MCF 10A (cell line): ENCODE measurements at regions of chr4 and their contacts with region 1.

Region 1: GRCh38 chr4:139301113-139301820 is at the start of gene NAA15:
- DNase-seq: peak; percentile 98
- H3K4me3 Mint-ChIP-seq: peak within 1 kb of the TSS; percentile 87
- H3K27ac Mint-ChIP-seq: peak within 1 kb of the TSS; percentile 98
- H3K4me1 Mint-ChIP-seq: peaks cover 7% of the 10 kb centered on the region
- H3K27me3 Mint-ChIP-seq: no peaks in the 10 kb centered on the region
- CTCF ChIP-seq: no peak
- total RNA-seq, gene NAA15: 54.9 and 80.6 TPM in 2 replicates

Region 2: GRCh38 chr4:139015269-139015947 is 285.9 kb before region 1 on chr4 and contains the start of gene NOCT:
- CTCF ChIA-PET with region 1: interaction called, 3 read pairs
- POLR2A ChIA-PET with region 1: interaction called, 34 read pairs
- intact Hi-C with region 1: no loop called
- DNase-seq: peak; percentile 94
- H3K4me3 Mint-ChIP-seq: peak within 1 kb of the TSS; percentile 72
- H3K27ac Mint-ChIP-seq: peak within 1 kb of the TSS; percentile 95
- H3K4me1 Mint-ChIP-seq: peaks cover 38% of the 10 kb centered on the region
- H3K27me3 Mint-ChIP-seq: no peaks in the 10 kb centered on the region
- CTCF ChIP-seq: no peak
- total RNA-seq, gene NOCT: 16.5 and 25.5 TPM in 2 replicates

Region 3: GRCh38 chr4:139167774-139168444 is 133.4 kb before region 1 on chr4:
- CTCF ChIA-PET with region 1: interaction called, 16 read pairs
- POLR2A ChIA-PET with region 1: interaction called, 38 read pairs
- intact Hi-C with region 1: no loop called
- DNase-seq: peak; percentile 87
- H3K4me3 Mint-ChIP-seq: no peak overlapping the region
- H3K27ac Mint-ChIP-seq: peak overlapping the region; percentile 27
- H3K4me1 Mint-ChIP-seq: peaks cover 30% of the 10 kb centered on the region
- H3K27me3 Mint-ChIP-seq: no peaks in the 10 kb centered on the region
- CTCF ChIP-seq: peak; percentile 57

Region 4: DNA sequence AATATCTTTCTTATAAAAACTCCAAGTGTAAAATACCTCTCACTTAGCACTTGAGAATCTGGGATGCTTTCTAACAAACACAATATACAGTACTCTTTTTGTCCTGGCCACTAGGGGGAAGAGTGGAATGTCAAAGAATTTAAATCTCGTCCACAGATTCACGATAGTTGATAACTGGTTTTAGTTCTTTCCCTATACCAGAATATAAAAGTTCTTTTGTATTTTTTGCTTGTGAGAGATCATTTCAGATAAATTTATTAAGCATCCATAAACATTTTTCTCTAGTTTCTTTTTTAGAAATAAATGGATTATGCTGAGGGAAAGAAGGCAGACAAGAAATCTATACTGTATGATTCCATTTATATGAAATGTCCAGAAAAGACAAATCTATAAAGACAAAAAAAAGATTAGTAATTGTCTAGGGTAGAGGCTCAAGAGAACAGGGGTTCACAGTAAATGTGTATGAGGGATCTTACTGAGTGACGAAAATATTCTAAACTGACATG is 71.7 kb before region 1 on chr4:
- CTCF ChIA-PET with region 1: interaction called, 57 read pairs
- POLR2A ChIA-PET with region 1: interaction called, 19 read pairs
- intact Hi-C with region 1: no loop called
- DNase-seq: peak; percentile 72
- H3K4me3 Mint-ChIP-seq: no peak overlapping the region
- H3K27ac Mint-ChIP-seq: no peak overlapping the region
- H3K4me1 Mint-ChIP-seq: no peaks in the 10 kb centered on the region
- H3K27me3 Mint-ChIP-seq: no peaks in the 10 kb centered on the region
- CTCF ChIP-seq: peak; percentile 62

Region 5: GRCh38 chr4:139266583-139267257 is 34.5 kb before region 1 on chr4:
- CTCF ChIA-PET with region 1: interaction called, 4 read pairs
- POLR2A ChIA-PET with region 1: interaction called, 16 read pairs
- intact Hi-C with region 1: no loop called
- DNase-seq: peak; percentile 53
- H3K4me3 Mint-ChIP-seq: peak overlapping the region; percentile 71
- H3K27ac Mint-ChIP-seq: peak overlapping the region; percentile 61
- H3K4me1 Mint-ChIP-seq: peaks cover 14% of the 10 kb centered on the region
- H3K27me3 Mint-ChIP-seq: no peaks in the 10 kb centered on the region
- CTCF ChIP-seq: no peak

Region 6: GRCh38 chr4:139331185-139331584 is 29.9 kb after region 1 on chr4:
- CTCF ChIA-PET with region 1: no interaction called
- POLR2A ChIA-PET with region 1: interaction called, 33 read pairs
- intact Hi-C with region 1: no loop called
- DNase-seq: no peak
- H3K4me3 Mint-ChIP-seq: no peak overlapping the region
- H3K27ac Mint-ChIP-seq: peak overlapping the region; percentile 24
- H3K4me1 Mint-ChIP-seq: no peaks in the 10 kb centered on the region
- H3K27me3 Mint-ChIP-seq: no peaks in the 10 kb centered on the region
- CTCF ChIP-seq: no peak

Region 7: DNA sequence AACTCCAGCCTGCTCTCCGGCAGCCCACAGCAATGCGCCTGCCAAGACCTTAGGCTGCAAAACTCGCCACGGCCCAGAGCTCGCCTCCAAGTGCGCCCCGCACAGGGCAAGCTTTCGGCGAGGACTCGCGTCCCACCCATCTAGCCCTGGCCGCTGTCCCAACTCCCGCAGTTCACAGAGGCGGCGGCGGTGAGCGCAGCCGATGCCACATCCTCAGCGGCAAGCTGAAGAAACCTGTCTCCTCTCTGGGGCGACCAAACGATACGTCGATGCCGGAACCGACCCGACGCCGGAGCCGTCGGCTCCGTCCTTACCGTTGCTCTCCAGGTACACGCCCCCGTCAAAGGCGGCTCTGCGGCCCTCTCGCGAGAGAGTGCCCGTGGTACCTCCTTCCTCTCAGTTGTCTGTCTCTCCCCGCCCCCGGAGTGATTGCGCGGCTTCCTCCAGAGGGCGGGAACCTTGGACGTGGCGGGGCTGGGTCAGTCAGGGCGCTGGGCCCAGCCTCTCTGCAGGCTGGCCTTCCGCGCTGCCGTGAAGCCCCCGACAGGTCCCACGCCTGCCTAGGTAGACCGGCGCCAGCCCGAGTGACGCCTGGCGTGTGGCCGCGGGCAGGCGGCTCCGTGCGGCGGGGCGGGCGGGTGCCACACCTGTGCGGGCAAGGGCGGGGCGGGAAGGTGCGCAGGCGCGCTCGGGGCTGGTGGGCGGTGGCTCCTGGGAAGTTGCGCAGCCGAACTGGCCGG is 152.3 kb after region 1 on chr4:
- CTCF ChIA-PET with region 1: interaction called, 3 read pairs
- POLR2A ChIA-PET with region 1: interaction called, 13 read pairs
- intact Hi-C with region 1: loop called (anchors 5 kb)
- DNase-seq: peak; percentile 98
- H3K4me3 Mint-ChIP-seq: peak overlapping the region; percentile 100
- H3K27ac Mint-ChIP-seq: peak overlapping the region; percentile 97
- H3K4me1 Mint-ChIP-seq: peaks cover 45% of the 10 kb centered on the region
- H3K27me3 Mint-ChIP-seq: no peaks in the 10 kb centered on the region
- CTCF ChIP-seq: no peak

Region 8: DNA sequence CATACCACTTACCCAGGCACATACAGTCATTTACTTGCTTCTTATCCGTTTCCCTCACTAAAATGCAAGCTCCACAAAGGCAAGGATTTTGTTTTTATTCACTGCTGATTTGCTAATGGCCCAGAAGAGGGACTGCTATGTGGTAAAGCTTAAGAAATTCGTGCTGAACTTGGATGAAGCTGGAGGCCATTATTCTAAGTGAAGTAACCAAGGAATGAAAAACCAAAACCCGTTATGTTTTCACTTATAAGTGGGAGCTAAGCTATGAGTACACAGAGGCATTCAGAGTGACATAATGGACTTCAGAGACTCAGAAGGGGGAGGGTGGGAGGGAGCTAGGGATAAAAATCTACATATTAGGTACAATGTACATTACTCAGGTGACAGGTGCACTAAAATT is 199.8 kb after region 1 on chr4:
- CTCF ChIA-PET with region 1: no interaction called
- POLR2A ChIA-PET with region 1: no interaction called
- intact Hi-C with region 1: no loop called
- DNase-seq: no peak
- H3K4me3 Mint-ChIP-seq: no peak overlapping the region
- H3K27ac Mint-ChIP-seq: no peak overlapping the region
- H3K4me1 Mint-ChIP-seq: no peaks in the 10 kb centered on the region
- H3K27me3 Mint-ChIP-seq: no peaks in the 10 kb centered on the region
- CTCF ChIP-seq: no peak